T-cell (primary cell): ENCODE measurements at regions of chr3 and their contacts with region 1.

Region 1: GRCh38 chr3:108090701-108091451 is at the start of gene CD47:
- DNase-seq: peak; percentile 88 to 99 (median 94)
- ATAC-seq: peak; percentile 82 to 86 (median 86)
- H3K4me3 ChIP-seq: peak within 1 kb of the TSS; percentile 87 to 89
- H3K4me3 Mint-ChIP-seq: peak within 1 kb of the TSS in 2 of 3 donors; percentile 81 to 95
- H3K27ac ChIP-seq: peak within 1 kb of the TSS; percentile 95
- H3K27ac Mint-ChIP-seq: peak within 1 kb of the TSS; percentile 97 to 98
- H3K4me1 ChIP-seq: peaks cover 37 to 55% of the 10 kb centered on the region in 2 experiments
- H3K4me1 Mint-ChIP-seq: peaks cover 31 to 38% (median 35%) of the 10 kb centered on the region in 3 donors
- H3K27me3 ChIP-seq: no peaks in the 10 kb centered on the region
- H3K27me3 Mint-ChIP-seq: no peaks in the 10 kb centered on the region
- total RNA-seq, gene CD47: 154 to 186 (median 161) TPM

Region 2: GRCh38 chr3:107884719-107885460 is 206.0 kb before region 1 on chr3:
- CTCF ChIA-PET with region 1: no interaction called
- POLR2A ChIA-PET with region 1: no interaction called
- DNase-seq: no peak
- ATAC-seq: no peak
- H3K4me3 ChIP-seq: no peak overlapping the region
- H3K4me3 Mint-ChIP-seq: no peak overlapping the region
- H3K27ac ChIP-seq: no peak overlapping the region
- H3K27ac Mint-ChIP-seq: no peak overlapping the region
- H3K4me1 ChIP-seq: no peaks in the 10 kb centered on the region
- H3K4me1 Mint-ChIP-seq: no peaks in the 10 kb centered on the region
- H3K27me3 ChIP-seq: no peaks in the 10 kb centered on the region
- H3K27me3 Mint-ChIP-seq: no peaks in the 10 kb centered on the region

Region 3: DNA sequence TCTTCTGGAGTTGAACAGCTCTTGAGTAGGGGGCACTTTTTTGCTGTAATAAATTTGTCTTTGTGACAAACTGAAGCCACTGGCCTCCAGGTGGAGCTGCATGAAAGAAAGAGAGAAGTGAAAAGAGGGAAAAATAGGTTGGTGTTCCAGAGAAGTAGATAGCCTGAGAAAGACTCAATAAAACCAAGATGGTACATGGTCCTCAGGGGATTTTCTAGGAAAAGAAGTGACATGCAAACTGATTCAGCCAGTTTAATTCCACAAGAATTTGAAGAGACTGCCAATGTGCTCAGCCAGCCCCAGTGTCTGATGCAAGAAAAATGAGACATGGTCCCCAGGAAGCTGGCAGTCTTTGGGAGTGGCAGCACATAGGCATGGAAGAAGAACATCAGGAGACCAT is 152.7 kb before region 1 on chr3:
- CTCF ChIA-PET with region 1: no interaction called
- POLR2A ChIA-PET with region 1: no interaction called
- DNase-seq: peak in 3 of 35 experiments; percentile 4 to 37 (median 13)
- ATAC-seq: no peak
- H3K4me3 ChIP-seq: no peak overlapping the region
- H3K4me3 Mint-ChIP-seq: no peak overlapping the region
- H3K27ac ChIP-seq: no peak overlapping the region
- H3K27ac Mint-ChIP-seq: no peak overlapping the region
- H3K4me1 ChIP-seq: peaks cover 0 to 2% of the 10 kb centered on the region in 2 experiments
- H3K4me1 Mint-ChIP-seq: peaks cover 12 to 20% (median 16%) of the 10 kb centered on the region in 3 donors
- H3K27me3 ChIP-seq: no peaks in the 10 kb centered on the region
- H3K27me3 Mint-ChIP-seq: peaks cover 0 to 4% of the 10 kb centered on the region in 2 donors

Region 4: DNA sequence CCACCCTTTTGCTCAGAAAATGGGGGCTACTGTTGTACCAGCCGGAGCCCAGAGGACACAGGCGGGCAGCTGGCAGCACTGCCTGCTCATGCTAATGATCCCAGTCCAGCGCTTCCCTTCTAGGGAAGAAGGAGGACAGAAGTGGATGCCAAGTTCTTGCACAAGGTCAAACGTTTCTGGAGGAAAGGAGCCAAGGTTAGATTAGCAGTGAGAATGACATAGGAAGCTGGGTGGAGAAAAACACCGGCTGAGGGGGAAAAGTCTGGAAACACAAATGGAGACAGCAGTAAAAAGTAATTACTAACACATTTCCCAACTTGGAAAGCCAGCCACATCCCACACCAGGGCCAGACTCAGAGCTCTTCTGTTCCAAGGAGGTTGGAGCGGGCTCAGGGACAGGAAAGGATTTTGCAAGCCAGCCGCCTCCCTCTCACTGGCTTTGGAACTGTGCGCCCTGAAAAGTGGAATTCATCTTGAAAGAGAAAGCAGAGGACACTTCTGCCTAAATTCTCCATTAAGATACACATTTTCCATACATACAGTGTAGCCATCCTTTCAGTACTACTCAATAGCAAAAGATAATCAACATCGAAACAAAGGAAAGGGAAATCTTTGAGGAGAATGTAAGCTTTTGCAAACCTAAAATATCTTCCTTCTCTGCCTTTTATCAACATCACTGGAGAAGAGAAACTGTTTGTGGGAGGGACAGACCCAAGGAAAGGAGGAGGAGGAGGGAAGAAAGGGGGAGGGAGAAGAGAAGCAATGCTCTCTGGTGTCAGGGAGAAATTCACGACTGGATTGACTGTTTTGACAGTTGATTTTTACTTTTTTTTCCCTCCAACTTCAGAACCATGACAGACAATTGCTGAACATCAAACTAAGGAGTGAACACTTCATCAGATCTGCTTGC is 133.6 kb before region 1 on chr3:
- CTCF ChIA-PET with region 1: no interaction called
- POLR2A ChIA-PET with region 1: no interaction called
- DNase-seq: no peak
- ATAC-seq: no peak
- H3K4me3 ChIP-seq: no peak overlapping the region
- H3K4me3 Mint-ChIP-seq: no peak overlapping the region
- H3K27ac ChIP-seq: no peak overlapping the region
- H3K27ac Mint-ChIP-seq: peak overlapping the region in 1 of 2 donors; percentile 29
- H3K4me1 ChIP-seq: peaks cover 9 to 10% of the 10 kb centered on the region in 2 experiments
- H3K4me1 Mint-ChIP-seq: peaks cover 26 to 30% (median 30%) of the 10 kb centered on the region in 3 donors
- H3K27me3 ChIP-seq: no peaks in the 10 kb centered on the region
- H3K27me3 Mint-ChIP-seq: no peaks in the 10 kb centered on the region

Region 5: GRCh38 chr3:107976202-107976800 is 114.6 kb before region 1 on chr3:
- CTCF ChIA-PET with region 1: no interaction called
- POLR2A ChIA-PET with region 1: interaction called, 4 to 10 read pairs
- DNase-seq: no peak
- ATAC-seq: peak in 2 of 4 experiments; percentile 11 to 31
- H3K4me3 ChIP-seq: no peak overlapping the region
- H3K4me3 Mint-ChIP-seq: peak overlapping the region in 2 of 3 donors; percentile 37 to 75
- H3K27ac ChIP-seq: peak overlapping the region; percentile 36
- H3K27ac Mint-ChIP-seq: peak overlapping the region; percentile 95 to 96
- H3K4me1 ChIP-seq: peaks cover 47 to 48% of the 10 kb centered on the region in 2 experiments
- H3K4me1 Mint-ChIP-seq: peaks cover 64 to 77% (median 74%) of the 10 kb centered on the region in 3 donors
- H3K27me3 ChIP-seq: no peaks in the 10 kb centered on the region
- H3K27me3 Mint-ChIP-seq: no peaks in the 10 kb centered on the region

Region 6: GRCh38 chr3:108073764-108074431 is 17.0 kb before region 1 on chr3:
- CTCF ChIA-PET with region 1: interaction called, 6 to 10 read pairs
- POLR2A ChIA-PET with region 1: interaction called, 8 to 12 read pairs
- DNase-seq: no peak
- ATAC-seq: no peak
- H3K4me3 ChIP-seq: no peak overlapping the region
- H3K4me3 Mint-ChIP-seq: peak overlapping the region in 1 of 3 donors; percentile 48
- H3K27ac ChIP-seq: no peak overlapping the region
- H3K27ac Mint-ChIP-seq: peak overlapping the region; percentile 42 to 65
- H3K4me1 ChIP-seq: peaks cover 15 to 28% of the 10 kb centered on the region in 2 experiments
- H3K4me1 Mint-ChIP-seq: peaks cover 72 to 93% (median 77%) of the 10 kb centered on the region in 3 donors
- H3K27me3 ChIP-seq: no peaks in the 10 kb centered on the region
- H3K27me3 Mint-ChIP-seq: no peaks in the 10 kb centered on the region

Region 7: GRCh38 chr3:108079877-108080659 is 10.8 kb before region 1 on chr3:
- CTCF ChIA-PET with region 1: interaction called, 3 to 4 read pairs
- POLR2A ChIA-PET with region 1: interaction called, 10 to 12 read pairs
- DNase-seq: peak in 1 of 35 experiments; percentile 32
- ATAC-seq: peak in 2 of 4 experiments; percentile 47 to 75
- H3K4me3 ChIP-seq: no peak overlapping the region
- H3K4me3 Mint-ChIP-seq: peak overlapping the region; percentile 25 to 55 (median 32)
- H3K27ac ChIP-seq: peak overlapping the region; percentile 11
- H3K27ac Mint-ChIP-seq: peak overlapping the region; percentile 17 to 53
- H3K4me1 ChIP-seq: peaks cover 14 to 51% of the 10 kb centered on the region in 2 experiments
- H3K4me1 Mint-ChIP-seq: peaks cover 14 to 40% (median 26%) of the 10 kb centered on the region in 3 donors
- H3K27me3 ChIP-seq: no peaks in the 10 kb centered on the region
- H3K27me3 Mint-ChIP-seq: no peaks in the 10 kb centered on the region

Region 8: DNA sequence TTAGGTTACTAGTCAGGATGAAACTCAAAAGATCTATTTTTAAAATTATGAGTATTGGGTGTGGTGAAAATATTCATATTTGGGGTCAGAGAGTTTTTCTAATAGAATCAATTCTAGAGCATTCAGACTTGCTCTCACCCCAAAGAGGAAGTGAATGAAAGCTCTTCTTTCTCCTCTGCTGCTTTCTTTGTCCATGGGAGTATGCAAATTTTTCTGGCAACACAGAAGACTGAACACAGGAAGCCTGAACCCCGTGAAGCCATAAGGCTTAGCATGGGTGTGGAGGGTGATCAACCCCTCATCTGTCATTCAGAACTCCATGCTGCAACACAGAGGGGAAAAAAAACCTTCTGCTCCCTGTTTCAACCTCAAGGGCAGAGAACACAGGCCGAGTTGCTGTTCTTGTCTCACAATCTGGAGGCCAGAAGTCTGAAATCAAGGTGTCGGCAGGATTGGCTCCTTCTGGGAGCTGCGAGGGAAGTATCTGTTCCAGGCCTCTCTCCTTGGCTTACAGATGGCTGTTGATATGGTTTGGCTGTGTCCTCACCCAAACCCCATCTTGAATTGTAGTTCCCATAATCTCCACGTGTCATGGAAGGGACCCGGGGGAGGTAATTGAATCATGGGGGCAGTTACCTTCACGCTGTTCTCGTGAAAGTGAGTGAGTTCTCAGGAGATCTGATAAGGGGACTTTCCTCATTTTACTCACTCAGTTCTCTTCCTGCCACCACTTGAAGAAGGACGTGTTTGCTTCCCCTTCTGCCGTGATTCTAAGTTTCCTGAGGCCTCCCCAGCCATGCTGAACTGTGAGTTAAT is 33.7 kb after region 1 on chr3:
- CTCF ChIA-PET with region 1: interaction called, 6 read pairs
- POLR2A ChIA-PET with region 1: interaction called, 9 to 22 read pairs
- DNase-seq: peak; percentile 25 to 87 (median 59)
- ATAC-seq: peak; percentile 40 to 70 (median 46)
- H3K4me3 ChIP-seq: peak overlapping the region; percentile 17 to 51
- H3K4me3 Mint-ChIP-seq: peak overlapping the region; percentile 79 to 82 (median 81)
- H3K27ac ChIP-seq: peak overlapping the region; percentile 98
- H3K27ac Mint-ChIP-seq: peak overlapping the region; percentile 95 to 97
- H3K4me1 ChIP-seq: peaks cover 45 to 52% of the 10 kb centered on the region in 2 experiments
- H3K4me1 Mint-ChIP-seq: peaks cover 68 to 78% (median 70%) of the 10 kb centered on the region in 3 donors
- H3K27me3 ChIP-seq: no peaks in the 10 kb centered on the region
- H3K27me3 Mint-ChIP-seq: no peaks in the 10 kb centered on the region

Region 9: GRCh38 chr3:108130701-108131474 is 40.0 kb after region 1 on chr3:
- CTCF ChIA-PET with region 1: interaction called in 1 of 2 experiments, 6 read pairs
- POLR2A ChIA-PET with region 1: interaction called, 9 to 22 read pairs
- DNase-seq: no peak
- ATAC-seq: no peak
- H3K4me3 ChIP-seq: no peak overlapping the region
- H3K4me3 Mint-ChIP-seq: peak overlapping the region in 1 of 3 donors; percentile 62
- H3K27ac ChIP-seq: no peak overlapping the region
- H3K27ac Mint-ChIP-seq: peak overlapping the region; percentile 10 to 52
- H3K4me1 ChIP-seq: peaks cover 39 to 51% of the 10 kb centered on the region in 2 experiments
- H3K4me1 Mint-ChIP-seq: peaks cover 89 to 96% (median 91%) of the 10 kb centered on the region in 3 donors
- H3K27me3 ChIP-seq: no peaks in the 10 kb centered on the region
- H3K27me3 Mint-ChIP-seq: no peaks in the 10 kb centered on the region

Region 10: DNA sequence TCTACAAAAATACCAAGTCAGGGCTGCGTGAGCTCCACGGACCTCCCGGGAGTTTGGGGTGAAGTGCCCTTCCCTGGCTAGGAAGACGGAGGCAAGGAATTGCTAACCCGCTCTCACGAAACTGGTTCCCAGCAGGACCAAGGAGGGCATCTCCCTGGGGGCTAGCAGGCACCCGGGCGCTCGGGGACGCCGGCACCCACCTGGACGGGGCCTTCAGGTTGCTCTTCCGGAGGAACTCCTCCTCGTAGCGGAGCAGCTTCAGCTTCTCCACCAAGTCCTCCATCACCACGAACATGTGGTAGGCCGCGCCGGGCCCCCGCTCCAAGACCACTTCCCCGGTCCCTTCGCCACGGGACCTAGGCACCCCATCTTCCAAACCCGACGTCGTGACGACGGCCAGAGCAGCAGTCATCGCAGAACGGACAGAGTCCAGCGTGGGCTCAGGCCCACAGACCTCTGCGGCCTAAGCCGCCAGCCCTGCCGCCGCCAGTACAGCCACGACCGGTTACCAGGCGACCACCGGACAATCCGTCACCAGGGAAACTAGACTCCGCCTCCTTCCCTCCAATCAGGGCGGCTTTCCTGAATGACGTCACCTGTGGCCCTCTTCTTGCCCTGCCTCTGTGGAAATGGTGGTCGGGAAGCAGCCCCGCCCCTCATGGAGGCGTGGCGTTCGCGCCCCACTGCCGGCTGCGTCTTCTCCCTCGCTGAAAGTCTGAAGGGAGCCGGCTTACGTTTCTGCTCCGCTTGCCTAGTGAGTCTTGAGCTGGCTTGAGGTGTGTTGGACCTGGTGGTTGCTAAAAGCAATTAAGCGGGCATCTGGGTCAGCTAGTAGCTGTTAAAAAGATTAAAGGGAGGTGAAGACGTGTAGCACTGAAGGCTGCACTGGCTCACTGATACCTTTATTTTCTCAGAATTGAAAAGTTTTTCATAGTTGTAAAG is 131.3 kb after region 1 on chr3 and contains the start of gene IFT57:
- CTCF ChIA-PET with region 1: interaction called, 3 read pairs
- POLR2A ChIA-PET with region 1: interaction called, 4 to 35 read pairs
- DNase-seq: peak; percentile 90 to 99 (median 94)
- ATAC-seq: peak; percentile 94 to 96 (median 94)
- H3K4me3 ChIP-seq: peak within 1 kb of the TSS; percentile 91 to 94
- H3K4me3 Mint-ChIP-seq: peak within 1 kb of the TSS; percentile 92 to 98 (median 93)
- H3K27ac ChIP-seq: peak within 1 kb of the TSS; percentile 96
- H3K27ac Mint-ChIP-seq: peak within 1 kb of the TSS; percentile 99 to 100
- H3K4me1 ChIP-seq: peaks cover 18 to 35% of the 10 kb centered on the region in 2 experiments
- H3K4me1 Mint-ChIP-seq: peaks cover 53 to 68% (median 64%) of the 10 kb centered on the region in 3 donors
- H3K27me3 ChIP-seq: no peaks in the 10 kb centered on the region
- H3K27me3 Mint-ChIP-seq: no peaks in the 10 kb centered on the region
- total RNA-seq, gene IFT57: 24.8 to 36.7 (median 30.0) TPM